CD4-positive, alpha-beta T cell (primary cell): ENCODE measurements at regions of chr1 and their contacts with region 1.

Region 1: DNA sequence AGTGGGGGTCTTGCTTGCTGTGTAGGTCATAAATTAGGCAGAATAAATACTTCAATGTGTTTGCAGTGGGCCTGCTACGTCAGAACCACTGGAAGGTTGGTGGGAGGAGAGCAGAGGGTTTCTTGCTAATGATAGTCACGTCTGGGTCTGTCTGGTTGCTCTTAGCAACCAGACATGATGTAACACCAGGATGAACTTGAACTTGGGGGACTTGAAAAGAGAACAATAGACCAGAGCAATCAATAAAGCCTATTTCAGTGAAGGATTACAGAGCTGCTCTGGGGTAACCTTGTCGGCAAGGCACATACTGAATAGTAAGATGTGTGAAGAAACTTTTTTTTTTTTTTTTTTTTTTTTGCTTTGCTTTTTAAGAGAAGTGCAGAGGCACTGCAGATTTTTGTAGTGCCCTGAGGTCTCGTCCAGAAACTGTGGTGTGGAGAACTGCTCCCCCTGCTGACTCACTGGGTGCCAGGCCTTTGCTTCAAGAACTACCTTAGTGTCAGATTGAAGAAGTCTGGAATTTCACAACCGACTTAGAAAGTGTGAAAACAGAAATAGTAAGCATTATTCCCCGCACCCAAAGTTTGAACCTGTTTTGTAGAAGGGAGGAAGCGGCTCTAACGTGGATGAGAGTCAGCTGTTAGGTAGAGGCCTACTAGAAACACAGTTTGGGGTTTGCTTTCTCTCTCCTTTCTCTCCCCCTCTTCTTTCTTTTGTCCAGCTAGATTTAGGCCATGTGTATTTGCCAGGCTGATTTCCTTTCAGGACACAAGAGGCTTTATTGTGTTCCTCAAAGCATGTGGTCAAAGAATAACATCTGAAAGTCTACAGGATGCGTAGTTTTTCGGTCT is 271.6 kb downstream of the TM2D1 start:
- DNase-seq: peak; percentile 43 to 83 (median 59)
- ATAC-seq: peak; percentile 81
- H3K4me3 ChIP-seq: no peak overlapping the region
- H3K4me3 Mint-ChIP-seq: no peak overlapping the region
- H3K27ac ChIP-seq: no peak overlapping the region
- H3K27ac Mint-ChIP-seq: peak overlapping the region; percentile 3
- H3K4me1 ChIP-seq: no peaks in the 10 kb centered on the region
- H3K4me1 Mint-ChIP-seq: peaks cover 12% of the 10 kb centered on the region
- H3K27me3 ChIP-seq: no peaks in the 10 kb centered on the region
- H3K27me3 Mint-ChIP-seq: no peaks in the 10 kb centered on the region
- CTCF ChIP-seq: peak; percentile 69

Region 2: GRCh38 chr1:59971464-59971911 is 1481.8 kb before region 1 on chr1:
- CTCF ChIA-PET with region 1: interaction called, 5 read pairs
- POLR2A ChIA-PET with region 1: no interaction called
- intact Hi-C with region 1: loop called (anchors 2 to 5 kb)
- DNase-seq: peak in 13 of 14 experiments; percentile 4 to 61 (median 30)
- ATAC-seq: no peak
- H3K4me3 ChIP-seq: no peak overlapping the region
- H3K4me3 Mint-ChIP-seq: no peak overlapping the region
- H3K27ac ChIP-seq: no peak overlapping the region
- H3K27ac Mint-ChIP-seq: no peak overlapping the region
- H3K4me1 ChIP-seq: peaks cover 5% of the 10 kb centered on the region
- H3K4me1 Mint-ChIP-seq: peaks cover 7% of the 10 kb centered on the region
- H3K27me3 ChIP-seq: peaks cover 7 to 14% of the 10 kb centered on the region in 2 experiments
- H3K27me3 Mint-ChIP-seq: peaks cover 30% of the 10 kb centered on the region
- CTCF ChIP-seq: peak; percentile 81

Region 3: GRCh38 chr1:60848583-60849188 is 604.6 kb before region 1 on chr1:
- CTCF ChIA-PET with region 1: no interaction called
- POLR2A ChIA-PET with region 1: no interaction called
- intact Hi-C with region 1: loop called in 1 of 2 experiments (anchors 5 kb)
- DNase-seq: peak in 2 of 14 experiments; percentile 5 to 7
- ATAC-seq: no peak
- H3K4me3 ChIP-seq: no peak overlapping the region
- H3K4me3 Mint-ChIP-seq: no peak overlapping the region
- H3K27ac ChIP-seq: no peak overlapping the region
- H3K27ac Mint-ChIP-seq: no peak overlapping the region
- H3K4me1 ChIP-seq: no peaks in the 10 kb centered on the region
- H3K4me1 Mint-ChIP-seq: no peaks in the 10 kb centered on the region
- H3K27me3 ChIP-seq: peaks cover 0 to 5% of the 10 kb centered on the region in 2 experiments
- H3K27me3 Mint-ChIP-seq: peaks cover 13% of the 10 kb centered on the region
- CTCF ChIP-seq: no peak

Region 4: DNA sequence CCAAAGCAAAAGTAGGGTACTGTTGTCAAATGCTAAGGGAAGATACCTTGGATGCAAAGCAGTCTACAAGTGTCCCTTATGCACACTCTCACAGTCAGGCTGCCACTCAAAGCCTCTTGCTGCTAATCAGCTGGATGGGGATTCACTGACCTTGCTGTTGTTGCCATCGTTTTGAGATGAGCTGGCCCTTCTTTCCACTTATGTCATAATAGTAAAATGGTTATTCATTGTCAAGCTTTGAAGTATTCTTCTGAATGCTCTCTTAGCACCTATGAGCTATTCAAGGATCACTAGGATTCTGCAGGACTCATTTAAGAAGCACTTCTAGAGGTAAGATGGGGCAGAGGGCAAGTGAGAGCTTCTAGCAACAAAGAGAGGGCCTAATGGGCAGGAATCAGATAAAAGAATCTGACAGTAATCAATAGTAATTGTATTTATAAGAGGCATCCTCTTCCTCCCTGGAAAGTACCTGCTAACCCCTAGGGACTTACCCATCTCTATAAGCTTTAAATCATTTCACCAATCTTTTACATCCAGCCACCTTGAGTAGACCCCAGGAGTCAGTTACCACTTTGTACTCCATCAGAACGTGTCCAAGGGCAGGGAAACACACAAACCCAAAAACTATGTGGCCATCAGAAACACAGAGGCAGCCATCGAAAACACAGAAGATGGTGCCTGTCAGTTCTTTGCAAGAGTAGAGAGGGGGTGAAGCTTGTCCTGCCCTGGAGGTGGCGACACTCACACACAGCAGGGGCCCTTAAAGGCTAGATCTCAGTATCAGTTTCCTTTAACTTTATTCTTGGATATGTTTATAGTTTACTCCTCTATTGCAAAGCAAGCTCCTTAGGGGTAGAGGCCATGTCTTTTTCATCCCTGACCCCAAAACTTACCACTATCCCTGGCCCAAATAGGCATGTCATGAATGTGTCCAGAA is 474.6 kb before region 1 on chr1:
- CTCF ChIA-PET with region 1: interaction called, 3 read pairs
- POLR2A ChIA-PET with region 1: no interaction called
- intact Hi-C with region 1: loop called (anchors 1 to 2 kb)
- DNase-seq: peak in 12 of 14 experiments; percentile 1 to 58 (median 19)
- ATAC-seq: peak; percentile 61
- H3K4me3 ChIP-seq: no peak overlapping the region
- H3K4me3 Mint-ChIP-seq: no peak overlapping the region
- H3K27ac ChIP-seq: no peak overlapping the region
- H3K27ac Mint-ChIP-seq: no peak overlapping the region
- H3K4me1 ChIP-seq: no peaks in the 10 kb centered on the region
- H3K4me1 Mint-ChIP-seq: no peaks in the 10 kb centered on the region
- H3K27me3 ChIP-seq: no peaks in the 10 kb centered on the region
- H3K27me3 Mint-ChIP-seq: no peaks in the 10 kb centered on the region
- CTCF ChIP-seq: peak; percentile 15

Region 5: DNA sequence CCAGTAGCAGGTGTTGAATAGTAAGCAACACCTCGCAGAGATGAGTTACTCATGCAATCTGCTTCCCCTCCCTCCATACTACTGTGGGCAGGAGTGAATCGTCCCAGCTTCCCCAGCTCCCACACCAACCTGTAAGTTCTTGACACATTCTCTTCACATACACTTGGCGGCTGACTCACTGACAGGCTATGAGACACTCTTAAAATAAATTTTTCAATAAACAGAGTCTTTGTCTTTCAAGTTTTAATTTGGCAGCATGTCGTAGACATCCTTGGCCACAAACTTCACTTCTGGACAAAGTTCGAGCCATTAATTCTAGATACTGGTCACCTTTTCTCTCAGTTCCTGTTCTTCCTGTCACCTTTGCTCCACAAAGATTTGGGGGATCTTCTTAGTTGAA is 19.1 kb before region 1 on chr1:
- CTCF ChIA-PET with region 1: no interaction called
- POLR2A ChIA-PET with region 1: no interaction called
- intact Hi-C with region 1: no loop called
- DNase-seq: no peak
- ATAC-seq: no peak
- H3K4me3 ChIP-seq: no peak overlapping the region
- H3K4me3 Mint-ChIP-seq: no peak overlapping the region
- H3K27ac ChIP-seq: no peak overlapping the region
- H3K27ac Mint-ChIP-seq: no peak overlapping the region
- H3K4me1 ChIP-seq: no peaks in the 10 kb centered on the region
- H3K4me1 Mint-ChIP-seq: no peaks in the 10 kb centered on the region
- H3K27me3 ChIP-seq: no peaks in the 10 kb centered on the region
- H3K27me3 Mint-ChIP-seq: no peaks in the 10 kb centered on the region
- CTCF ChIP-seq: no peak

Region 6: GRCh38 chr1:61496476-61496893 is 43.1 kb after region 1 on chr1:
- CTCF ChIA-PET with region 1: no interaction called
- POLR2A ChIA-PET with region 1: no interaction called
- intact Hi-C with region 1: no loop called
- DNase-seq: no peak
- ATAC-seq: no peak
- H3K4me3 ChIP-seq: no peak overlapping the region
- H3K4me3 Mint-ChIP-seq: no peak overlapping the region
- H3K27ac ChIP-seq: no peak overlapping the region
- H3K27ac Mint-ChIP-seq: no peak overlapping the region
- H3K4me1 ChIP-seq: no peaks in the 10 kb centered on the region
- H3K4me1 Mint-ChIP-seq: no peaks in the 10 kb centered on the region
- H3K27me3 ChIP-seq: peaks cover 0 to 2% of the 10 kb centered on the region in 2 experiments
- H3K27me3 Mint-ChIP-seq: no peaks in the 10 kb centered on the region
- CTCF ChIP-seq: no peak